PC-3 (cell line): ENCODE measurements at regions of chr13 and their contacts with region 1.

Region 1: GRCh38 chr13:41019011-41019487 is at the start of gene ELF1:
- DNase-seq: peak; percentile 78
- ATAC-seq: peak; percentile 88
- H3K4me3 ChIP-seq: peak within 1 kb of the TSS; percentile 74
- H3K27ac ChIP-seq: peak within 1 kb of the TSS; percentile 91
- H3K4me1 ChIP-seq: peaks cover 14% of the 10 kb centered on the region
- H3K27me3 ChIP-seq: no peaks in the 10 kb centered on the region
- CTCF ChIP-seq: no peak
- total RNA-seq, gene ELF1: 15.3 and 17.7 TPM in 2 replicates

Region 2: DNA sequence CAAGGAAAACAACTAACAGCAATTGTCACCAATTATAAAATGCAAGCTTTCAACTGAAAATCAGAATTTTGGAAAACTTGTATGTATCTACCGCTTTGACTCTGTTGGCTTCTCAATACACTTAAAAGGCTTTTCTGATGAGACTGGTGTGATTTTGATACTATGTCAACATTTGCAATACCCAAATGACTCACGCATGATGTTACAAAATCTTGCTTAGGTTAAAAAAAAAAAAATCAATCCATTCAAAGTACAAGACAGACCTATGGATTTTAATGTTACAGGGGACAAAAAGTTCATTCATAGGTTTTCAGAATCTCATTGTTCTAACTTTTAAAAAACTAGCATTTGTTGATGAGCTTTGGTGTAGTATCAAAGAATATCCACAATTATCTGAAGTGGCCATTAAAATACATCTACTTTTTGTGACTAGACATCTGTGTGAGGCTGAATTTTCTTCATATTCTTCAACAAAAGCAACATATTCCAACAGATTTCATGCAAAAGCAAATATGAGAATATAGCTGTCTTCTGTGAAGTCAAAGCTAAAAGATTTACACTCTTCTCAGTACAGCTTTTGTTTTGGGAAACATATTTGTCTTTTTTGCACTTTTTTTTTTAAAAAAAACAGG is 10.6 kb before region 1 on chr13:
- CTCF ChIA-PET with region 1: no interaction called
- POLR2A ChIA-PET with region 1: no interaction called
- intact Hi-C with region 1: loop called (anchors 1 kb)
- DNase-seq: peak; percentile 78
- ATAC-seq: peak; percentile 75
- H3K4me3 ChIP-seq: peak overlapping the region; percentile 38
- H3K27ac ChIP-seq: peak overlapping the region; percentile 59
- H3K4me1 ChIP-seq: peaks cover 42% of the 10 kb centered on the region
- H3K27me3 ChIP-seq: no peaks in the 10 kb centered on the region
- CTCF ChIP-seq: no peak

Region 3: GRCh38 chr13:41054212-41054877 is 35.3 kb after region 1 on chr13:
- CTCF ChIA-PET with region 1: no interaction called
- POLR2A ChIA-PET with region 1: no interaction called
- intact Hi-C with region 1: loop called (anchors 2 kb)
- DNase-seq: peak; percentile 72
- ATAC-seq: peak; percentile 76
- H3K4me3 ChIP-seq: peak overlapping the region; percentile 10; the same call in 1 of the 2 replicates
- H3K27ac ChIP-seq: peak overlapping the region; percentile 45; the same call in 1 of the 2 replicates
- H3K4me1 ChIP-seq: peaks cover 27% of the 10 kb centered on the region
- H3K27me3 ChIP-seq: no peaks in the 10 kb centered on the region
- CTCF ChIP-seq: peak; percentile 73

Region 4: GRCh38 chr13:41428155-41428554 is 409.1 kb after region 1 on chr13:
- CTCF ChIA-PET with region 1: no interaction called
- POLR2A ChIA-PET with region 1: no interaction called
- intact Hi-C with region 1: no loop called
- DNase-seq: no peak
- ATAC-seq: no peak
- H3K4me3 ChIP-seq: no peak overlapping the region
- H3K27ac ChIP-seq: no peak overlapping the region
- H3K4me1 ChIP-seq: no peaks in the 10 kb centered on the region
- H3K27me3 ChIP-seq: no peaks in the 10 kb centered on the region
- CTCF ChIP-seq: no peak